ENCODE measurements at regions of chr16 and their contacts with region 1.

Region 1: GRCh38 chr16:77971306-77972271 is 50.8 kb upstream of the CLEC3A start:
- DNase-seq: peak; percentile 54
- H3K4me3 Mint-ChIP-seq: no peak overlapping the region
- H3K27ac Mint-ChIP-seq: no peak overlapping the region
- H3K4me1 Mint-ChIP-seq: no peaks in the 10 kb centered on the region
- H3K27me3 Mint-ChIP-seq: peaks cover 2% of the 10 kb centered on the region

Region 2: GRCh38 chr16:77684181-77684526 is 287.4 kb before region 1 on chr16:
- intact Hi-C with region 1: no loop called
- DNase-seq: no peak
- H3K4me3 Mint-ChIP-seq: no peak overlapping the region
- H3K27ac Mint-ChIP-seq: no peak overlapping the region
- H3K4me1 Mint-ChIP-seq: no peaks in the 10 kb centered on the region
- H3K27me3 Mint-ChIP-seq: peaks cover 13% of the 10 kb centered on the region

Region 3: GRCh38 chr16:77788181-77789084 is 183.2 kb before region 1 on chr16 and contains the start of gene VAT1L:
- intact Hi-C with region 1: loop called (anchors 10 kb)
- DNase-seq: no peak
- H3K4me3 Mint-ChIP-seq: peak within 1 kb of the TSS; percentile 68
- H3K27ac Mint-ChIP-seq: no peak within 1 kb of the TSS
- H3K4me1 Mint-ChIP-seq: no peaks in the 10 kb centered on the region
- H3K27me3 Mint-ChIP-seq: peaks cover 56% of the 10 kb centered on the region
- total RNA-seq, gene VAT1L: not detected in 2 replicates

Region 4: GRCh38 chr16:77993111-77993985 is 21.8 kb after region 1 on chr16:
- intact Hi-C with region 1: no loop called
- DNase-seq: no peak
- H3K4me3 Mint-ChIP-seq: no peak overlapping the region
- H3K27ac Mint-ChIP-seq: no peak overlapping the region
- H3K4me1 Mint-ChIP-seq: no peaks in the 10 kb centered on the region
- H3K27me3 Mint-ChIP-seq: no peaks in the 10 kb centered on the region